ENCODE measurements at regions of chr2 and their contacts with region 1.

Region 1: GRCh38 chr2:172128484-172128883 is 25.8 kb upstream of the DLX2 start:
- DNase-seq: no peak
- ATAC-seq: no peak
- H3K4me3 Mint-ChIP-seq: no peak overlapping the region
- H3K27ac Mint-ChIP-seq: no peak overlapping the region
- H3K4me1 Mint-ChIP-seq: peaks cover 27% of the 10 kb centered on the region
- H3K27me3 Mint-ChIP-seq: peaks cover 51% of the 10 kb centered on the region
- CTCF ChIP-seq: no peak

Region 2: DNA sequence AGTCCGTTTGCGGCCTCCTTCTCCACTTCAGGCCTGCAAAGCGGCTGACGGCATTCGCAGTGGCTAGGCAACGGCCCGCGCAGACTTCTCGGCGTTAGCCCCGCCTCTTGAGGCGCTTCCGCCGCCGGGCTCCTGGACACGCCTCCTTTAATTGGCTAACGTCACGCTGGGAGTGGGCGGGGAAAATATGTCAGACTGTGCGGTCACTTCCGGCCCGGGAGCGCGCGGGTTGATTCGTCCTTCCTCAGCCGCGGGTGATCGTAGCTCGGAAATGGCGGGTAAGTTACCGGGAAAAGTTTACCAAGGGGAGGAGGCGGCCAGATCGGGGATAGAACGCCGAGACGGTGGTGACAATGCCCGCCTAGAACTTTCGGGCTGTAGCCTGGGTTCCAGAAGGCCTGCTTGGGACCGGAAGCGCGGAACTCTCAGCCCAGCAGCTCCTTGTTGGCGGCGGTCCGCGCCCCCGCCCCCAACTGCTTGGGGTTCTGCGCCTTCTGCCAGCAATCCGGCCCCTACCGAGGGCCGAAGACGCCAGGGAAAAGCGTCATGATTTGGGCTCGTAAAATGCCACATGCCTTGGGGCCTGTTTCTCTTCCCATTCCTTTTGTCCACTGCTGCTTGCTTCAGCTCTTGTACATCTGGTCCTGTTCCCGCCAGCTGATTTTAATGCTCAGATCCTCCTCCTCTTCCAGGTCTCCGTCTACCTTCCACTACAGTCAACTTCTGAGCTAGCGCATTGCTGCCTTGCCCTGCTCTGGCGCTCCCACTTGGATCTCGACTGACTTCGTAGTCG is 206.1 kb before region 1 on chr2 and contains the start of gene HAT1:
- CTCF ChIA-PET with region 1: interaction called, 12 read pairs
- POLR2A ChIA-PET with region 1: no interaction called
- DNase-seq: peak; percentile 98
- ATAC-seq: peak; percentile 97
- H3K4me3 Mint-ChIP-seq: peak within 1 kb of the TSS; percentile 97
- H3K27ac Mint-ChIP-seq: peak within 1 kb of the TSS; percentile 99
- H3K4me1 Mint-ChIP-seq: peaks cover 20% of the 10 kb centered on the region
- H3K27me3 Mint-ChIP-seq: no peaks in the 10 kb centered on the region; the same call in 1 of the 2 replicates
- CTCF ChIP-seq: no peak
- total RNA-seq, gene HAT1: 50.6 to 58.9 TPM (median 54.5 TPM) in 3 replicates

Region 3: GRCh38 chr2:172102391-172103278 is 25.8 kb before region 1 on chr2 and contains the start of gene DLX2:
- CTCF ChIA-PET with region 1: interaction called, 56 read pairs
- POLR2A ChIA-PET with region 1: no interaction called
- DNase-seq: peak; percentile 95
- ATAC-seq: peak; percentile 54
- H3K4me3 Mint-ChIP-seq: peak within 1 kb of the TSS; percentile 72
- H3K27ac Mint-ChIP-seq: no peak within 1 kb of the TSS
- H3K4me1 Mint-ChIP-seq: peaks cover 39% of the 10 kb centered on the region
- H3K27me3 Mint-ChIP-seq: peaks cover 99% of the 10 kb centered on the region
- CTCF ChIP-seq: no peak
- total RNA-seq, gene DLX2: 0.28 to 0.64 TPM (median 0.55 TPM) in 3 replicates

Region 4: DNA sequence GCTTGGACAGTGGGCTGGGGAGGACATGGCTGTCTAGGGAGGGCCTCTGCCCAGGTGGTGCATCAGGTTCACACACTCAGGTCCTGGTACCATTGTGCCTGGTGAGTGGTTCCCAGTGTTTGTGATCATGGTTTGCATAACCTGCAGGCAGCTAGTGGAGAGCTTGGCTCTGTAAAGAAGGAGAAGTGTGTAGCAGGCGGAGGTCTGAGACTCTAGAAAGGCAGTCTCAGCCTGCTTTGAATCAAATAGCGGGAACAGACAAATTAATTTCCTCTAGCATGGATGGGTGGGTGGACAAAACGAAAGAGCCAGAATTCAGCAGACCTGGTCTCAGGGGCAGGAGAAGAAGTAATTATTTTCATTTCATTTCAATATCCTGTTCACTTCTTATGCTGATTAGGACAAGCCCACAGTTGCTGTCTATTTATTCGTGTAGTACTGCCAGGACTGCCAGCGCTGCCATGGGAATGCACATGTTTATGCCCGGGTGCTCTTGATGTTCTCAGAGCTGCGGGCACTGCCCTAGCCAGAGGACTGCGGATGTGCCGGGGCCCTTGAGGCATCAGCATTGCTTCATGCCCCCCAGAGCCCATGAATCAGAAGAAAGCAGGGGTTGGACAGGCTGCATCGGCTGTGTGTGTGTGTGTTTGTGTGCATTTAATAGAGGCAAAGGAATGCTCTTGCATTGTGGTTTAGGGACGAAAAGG is 19.6 kb after region 1 on chr2:
- CTCF ChIA-PET with region 1: interaction called, 12 read pairs
- POLR2A ChIA-PET with region 1: no interaction called
- DNase-seq: no peak
- ATAC-seq: no peak
- H3K4me3 Mint-ChIP-seq: no peak overlapping the region
- H3K27ac Mint-ChIP-seq: no peak overlapping the region
- H3K4me1 Mint-ChIP-seq: 0 out of 2 replicates have a peak, but pooled peaks cover 7% of the 10 kb centered on the region
- H3K27me3 Mint-ChIP-seq: peaks cover 36% of the 10 kb centered on the region
- CTCF ChIP-seq: no peak

Region 5: GRCh38 chr2:172404824-172405223 is 276.3 kb after region 1 on chr2:
- CTCF ChIA-PET with region 1: no interaction called
- POLR2A ChIA-PET with region 1: no interaction called
- DNase-seq: no peak
- ATAC-seq: no peak
- H3K4me3 Mint-ChIP-seq: no peak overlapping the region
- H3K27ac Mint-ChIP-seq: no peak overlapping the region
- H3K4me1 Mint-ChIP-seq: peaks cover 17% of the 10 kb centered on the region
- H3K27me3 Mint-ChIP-seq: no peaks in the 10 kb centered on the region
- CTCF ChIP-seq: no peak

Region 6: DNA sequence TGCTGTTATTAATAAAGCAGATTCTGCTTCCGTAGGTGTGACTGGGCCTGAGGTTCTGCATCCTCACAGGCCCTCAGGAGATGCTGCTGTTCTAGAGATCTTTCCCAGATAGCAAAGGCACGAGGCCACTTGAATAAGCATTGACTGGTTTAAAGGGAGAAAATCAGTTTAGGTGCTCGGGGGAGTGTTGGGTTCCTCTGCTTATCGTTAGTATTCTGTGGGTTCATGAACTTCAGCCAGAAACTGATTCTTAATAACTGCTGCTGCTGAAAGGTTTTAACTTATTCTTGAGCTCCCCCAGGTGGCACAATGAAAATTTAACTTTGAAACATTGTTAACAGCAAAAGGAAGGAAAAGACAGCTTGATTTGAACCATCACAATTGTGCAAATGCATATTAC is 355.8 kb after region 1 on chr2:
- CTCF ChIA-PET with region 1: interaction called, 14 read pairs
- POLR2A ChIA-PET with region 1: no interaction called
- DNase-seq: no peak
- ATAC-seq: no peak
- H3K4me3 Mint-ChIP-seq: no peak overlapping the region
- H3K27ac Mint-ChIP-seq: no peak overlapping the region
- H3K4me1 Mint-ChIP-seq: 0 out of 2 replicates have a peak, but pooled peaks cover 3% of the 10 kb centered on the region
- H3K27me3 Mint-ChIP-seq: no peaks in the 10 kb centered on the region
- CTCF ChIP-seq: no peak

Measured in WTC11 (cell line).